GM12878 (cell line): ENCODE measurements at regions of chr11 and their contacts with region 1.

Region 1: GRCh38 chr11:93234602-93235207 is 36.9 kb upstream of the SLC36A4 start:
- DNase-seq: peak; percentile 42
- ATAC-seq: peak; percentile 99
- H3K4me3 ChIP-seq: no peak overlapping the region
- H3K27ac ChIP-seq: no peak overlapping the region
- H3K4me1 ChIP-seq: no peaks in the 10 kb centered on the region
- H3K27me3 ChIP-seq: no peaks in the 10 kb centered on the region; a peak in 1 of 4 replicates
- CTCF ChIP-seq: peak; percentile 95 to 99 (median 98); a peak in 5 of 6 replicates
- EP300 ChIP-seq: no peak
- POLR2A ChIP-seq: no peak
- RAD21 ChIP-seq: peak; percentile 98

Region 2: DNA sequence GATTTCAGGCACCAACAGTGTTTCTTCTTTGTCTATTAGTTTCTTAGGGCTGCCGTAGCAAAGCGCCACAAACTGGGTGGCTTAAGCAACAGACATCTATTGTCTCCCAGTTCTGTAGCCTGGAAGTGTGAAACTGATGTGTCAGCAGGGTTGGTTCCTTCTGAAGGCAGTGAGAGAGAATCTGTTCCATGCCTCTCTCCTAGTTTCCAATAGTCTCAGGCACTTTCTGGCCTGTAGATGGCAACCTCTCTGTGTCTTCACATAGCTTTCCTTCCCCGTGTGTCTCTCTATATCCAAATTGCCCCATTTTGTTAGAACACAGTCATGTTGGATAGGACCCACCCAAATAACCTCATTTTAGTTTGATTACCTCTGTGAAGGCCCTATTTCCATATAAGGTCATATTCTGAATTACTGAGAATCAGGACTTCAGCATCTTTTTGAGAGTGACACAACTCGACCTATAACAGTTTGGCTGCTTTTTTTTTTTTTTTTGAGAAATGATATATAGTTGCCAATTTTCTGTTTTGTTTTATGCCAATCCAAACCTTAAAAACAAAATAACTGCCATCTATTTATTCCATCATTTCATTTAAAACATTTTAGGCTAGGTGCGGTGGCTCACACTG is 145.1 kb before region 1 on chr11:
- CTCF ChIA-PET with region 1: no interaction called
- POLR2A ChIA-PET with region 1: no interaction called
- RAD21 ChIA-PET with region 1: no interaction called
- SMC1A ChIA-PET with region 1: no interaction called
- in situ Hi-C with region 1: no loop called
- intact Hi-C with region 1: loop called (anchors 5 kb)
- DNase-seq: no peak
- ATAC-seq: peak; percentile 79
- H3K4me3 ChIP-seq: no peak overlapping the region
- H3K27ac ChIP-seq: no peak overlapping the region
- H3K4me1 ChIP-seq: no peaks in the 10 kb centered on the region
- H3K27me3 ChIP-seq: no peaks in the 10 kb centered on the region; a peak in 1 of 4 replicates
- CTCF ChIP-seq: peak; percentile 46 to 53 (median 48)
- EP300 ChIP-seq: no peak
- POLR2A ChIP-seq: no peak
- RAD21 ChIP-seq: peak; percentile 47; the same call in 1 of the 2 replicates

Region 3: DNA sequence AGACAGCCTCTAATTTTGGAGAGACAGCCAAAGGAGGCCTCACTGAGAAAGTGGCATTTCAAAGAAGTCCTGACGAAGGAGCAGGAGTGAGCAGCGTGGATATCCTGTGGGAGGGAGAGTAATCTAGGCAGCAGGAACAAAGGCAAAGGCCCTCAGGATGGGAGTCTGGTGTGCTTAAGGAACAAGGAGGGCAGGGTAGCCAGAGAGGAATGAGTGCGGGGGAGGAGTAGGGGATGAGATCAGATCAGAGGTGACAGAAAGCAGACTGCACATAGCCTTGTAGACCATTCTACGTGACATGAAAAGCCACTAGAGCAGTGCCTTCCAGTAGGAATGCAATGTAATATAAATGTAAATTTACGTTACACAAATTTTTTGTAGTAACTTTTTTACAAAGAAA is 42.5 kb before region 1 on chr11:
- CTCF ChIA-PET with region 1: no interaction called
- POLR2A ChIA-PET with region 1: no interaction called
- RAD21 ChIA-PET with region 1: no interaction called
- SMC1A ChIA-PET with region 1: no interaction called
- in situ Hi-C with region 1: no loop called
- intact Hi-C with region 1: no loop called
- DNase-seq: no peak
- ATAC-seq: no peak
- H3K4me3 ChIP-seq: no peak overlapping the region
- H3K27ac ChIP-seq: no peak overlapping the region
- H3K4me1 ChIP-seq: no peaks in the 10 kb centered on the region
- H3K27me3 ChIP-seq: no peaks in the 10 kb centered on the region
- CTCF ChIP-seq: no peak
- EP300 ChIP-seq: no peak
- POLR2A ChIP-seq: no peak
- RAD21 ChIP-seq: no peak

Region 4: DNA sequence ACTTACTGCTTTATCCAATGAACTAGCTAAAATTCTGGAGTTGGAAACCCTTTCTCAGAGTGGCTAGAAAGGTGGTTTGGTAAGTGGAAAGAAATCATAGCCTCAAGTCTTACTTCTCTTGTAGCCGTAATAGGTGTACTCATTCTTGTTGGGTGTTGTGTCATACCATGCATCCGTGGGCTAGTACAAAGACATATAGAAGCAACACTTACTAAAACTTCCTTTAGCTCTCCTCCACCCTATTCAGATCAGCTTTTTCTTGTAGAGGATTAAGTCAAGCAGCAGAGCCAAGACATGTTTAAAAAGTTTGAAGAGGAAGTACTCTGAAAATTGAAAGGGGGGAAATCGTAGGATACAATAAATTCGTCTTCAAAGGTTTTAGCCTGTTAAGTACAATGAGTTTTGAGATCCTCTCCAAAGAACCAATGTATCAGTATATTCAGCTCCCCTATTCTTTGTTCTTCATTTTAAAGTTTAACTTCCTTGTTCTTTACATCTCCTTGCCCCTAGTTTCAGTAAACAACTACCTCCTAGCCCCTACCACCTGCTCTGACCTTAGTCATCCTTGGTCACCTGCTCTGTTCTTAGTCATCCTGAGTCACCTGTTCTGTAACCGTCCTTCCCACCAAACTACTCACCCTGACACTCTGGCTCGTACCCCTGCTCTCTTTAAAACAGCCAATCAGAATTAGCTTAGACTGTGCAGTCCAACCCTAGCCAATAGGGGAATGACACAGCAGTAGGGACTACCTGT is 33.8 kb after region 1 on chr11:
- CTCF ChIA-PET with region 1: no interaction called
- POLR2A ChIA-PET with region 1: no interaction called
- RAD21 ChIA-PET with region 1: no interaction called
- SMC1A ChIA-PET with region 1: no interaction called
- in situ Hi-C with region 1: no loop called
- intact Hi-C with region 1: no loop called
- DNase-seq: no peak
- ATAC-seq: no peak
- H3K4me3 ChIP-seq: no peak overlapping the region
- H3K27ac ChIP-seq: no peak overlapping the region
- H3K4me1 ChIP-seq: no peaks in the 10 kb centered on the region
- H3K27me3 ChIP-seq: no peaks in the 10 kb centered on the region
- CTCF ChIP-seq: no peak
- EP300 ChIP-seq: no peak
- POLR2A ChIP-seq: no peak
- RAD21 ChIP-seq: no peak

Region 5: DNA sequence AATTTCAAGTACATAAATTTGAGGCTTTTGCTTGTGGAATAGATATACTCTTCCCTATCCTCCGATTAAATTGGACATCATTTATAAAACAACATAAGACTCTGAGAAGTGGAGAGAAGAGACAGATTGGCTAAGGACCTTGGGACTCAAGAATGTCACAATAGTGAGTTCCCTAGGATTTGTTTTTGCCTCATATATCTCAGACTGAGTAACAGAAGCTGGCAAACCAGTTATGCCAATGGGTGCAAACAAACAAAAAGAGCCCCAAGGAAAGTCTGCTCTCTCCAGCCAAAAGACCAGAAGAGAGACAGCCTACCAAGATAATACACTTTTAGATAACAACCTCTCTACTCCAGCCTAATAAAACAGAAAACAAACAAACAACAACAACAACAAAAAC is 124.7 kb after region 1 on chr11:
- CTCF ChIA-PET with region 1: no interaction called
- POLR2A ChIA-PET with region 1: no interaction called
- RAD21 ChIA-PET with region 1: no interaction called
- SMC1A ChIA-PET with region 1: no interaction called
- in situ Hi-C with region 1: no loop called
- intact Hi-C with region 1: no loop called
- DNase-seq: no peak
- ATAC-seq: no peak
- H3K4me3 ChIP-seq: no peak overlapping the region
- H3K27ac ChIP-seq: no peak overlapping the region
- H3K4me1 ChIP-seq: no peaks in the 10 kb centered on the region
- H3K27me3 ChIP-seq: no peaks in the 10 kb centered on the region
- CTCF ChIP-seq: no peak
- EP300 ChIP-seq: no peak
- POLR2A ChIP-seq: no peak
- RAD21 ChIP-seq: no peak

Region 6: DNA sequence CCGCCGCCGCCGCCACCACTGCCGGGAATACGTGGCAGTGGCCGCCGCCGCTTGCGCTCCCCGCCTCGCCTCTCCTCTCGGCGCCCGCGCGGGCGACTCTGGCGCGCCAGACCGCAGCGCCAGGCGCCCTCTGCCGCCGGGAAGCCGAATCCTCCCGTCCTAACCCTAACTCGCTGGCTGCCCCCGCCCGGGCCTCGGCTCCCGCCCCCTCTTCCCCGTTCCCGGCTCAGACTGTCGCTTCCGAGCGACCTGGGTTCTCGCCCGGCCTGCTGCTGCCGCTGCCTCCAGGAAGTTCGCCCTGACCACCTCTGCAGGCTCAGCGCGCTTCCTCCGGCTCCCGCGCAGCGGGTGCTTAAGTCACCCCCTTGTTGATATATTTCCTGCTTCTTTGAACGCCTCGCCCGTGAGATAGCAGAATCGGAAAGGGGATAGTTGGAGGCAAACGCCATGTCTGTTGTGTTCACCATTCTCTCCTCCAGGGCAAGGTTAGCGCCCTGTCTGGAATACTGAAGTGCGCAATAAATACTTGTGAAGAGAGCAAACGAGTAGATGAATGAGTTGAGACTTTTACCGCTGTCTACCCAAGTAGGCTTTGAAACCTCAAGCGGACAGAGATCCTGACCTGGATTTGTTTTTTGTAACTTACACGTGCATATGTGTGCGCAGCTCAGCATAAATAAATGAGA is 308.7 kb after region 1 on chr11 and contains the start of gene SMCO4:
- CTCF ChIA-PET with region 1: interaction called, 46 read pairs
- POLR2A ChIA-PET with region 1: no interaction called
- RAD21 ChIA-PET with region 1: interaction called, 44 read pairs
- SMC1A ChIA-PET with region 1: interaction called, 24 read pairs
- in situ Hi-C with region 1: loop called (anchors 5 kb)
- intact Hi-C with region 1: loop called (anchors 1 kb)
- DNase-seq: no peak
- ATAC-seq: peak; percentile 78
- H3K4me3 ChIP-seq: peak within 1 kb of the TSS; percentile 91
- H3K27ac ChIP-seq: peak within 1 kb of the TSS; percentile 45
- H3K4me1 ChIP-seq: peaks cover 12% of the 10 kb centered on the region
- H3K27me3 ChIP-seq: no peaks in the 10 kb centered on the region
- CTCF ChIP-seq: peak; percentile 52 to 90 (median 73)
- EP300 ChIP-seq: no peak
- POLR2A ChIP-seq: peak; percentile 58
- RAD21 ChIP-seq: peak; percentile 82
- polyA plus RNA-seq, gene SMCO4: 3.6 to 8.1 TPM

Region 7: GRCh38 chr11:93652161-93652597 is 417.5 kb after region 1 on chr11:
- CTCF ChIA-PET with region 1: interaction called, 81 read pairs
- POLR2A ChIA-PET with region 1: no interaction called
- RAD21 ChIA-PET with region 1: interaction called, 26 read pairs
- SMC1A ChIA-PET with region 1: interaction called, 39 read pairs
- in situ Hi-C with region 1: no loop called
- intact Hi-C with region 1: loop called (anchors 1 kb)
- DNase-seq: no peak
- ATAC-seq: peak; percentile 24; the same call in 1 of the 3 replicates
- H3K4me3 ChIP-seq: no peak overlapping the region
- H3K27ac ChIP-seq: no peak overlapping the region
- H3K4me1 ChIP-seq: no peaks in the 10 kb centered on the region
- H3K27me3 ChIP-seq: no peaks in the 10 kb centered on the region
- CTCF ChIP-seq: peak; percentile 46 to 68 (median 63)
- EP300 ChIP-seq: no peak
- POLR2A ChIP-seq: no peak
- RAD21 ChIP-seq: peak; percentile 68

Region 8: DNA sequence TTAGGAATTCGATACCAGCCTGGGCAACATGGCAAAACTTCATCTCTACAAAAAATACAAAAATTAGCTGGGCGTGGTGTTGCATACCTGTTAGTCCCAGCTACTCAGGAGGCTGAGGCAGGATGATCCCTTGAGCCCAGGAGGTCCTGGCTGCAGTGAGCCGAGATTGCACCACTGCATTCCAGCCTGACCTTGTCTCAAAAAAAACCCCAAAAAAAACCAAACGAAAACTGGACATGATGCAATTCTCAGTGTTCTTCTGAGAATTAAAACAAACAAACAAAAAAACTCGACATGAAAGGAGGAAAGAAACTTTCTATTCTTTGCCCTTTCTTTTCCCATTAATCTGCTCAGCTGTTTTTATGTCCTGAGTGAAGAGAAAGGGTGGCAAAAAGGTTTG is 556.8 kb after region 1 on chr11:
- CTCF ChIA-PET with region 1: no interaction called
- POLR2A ChIA-PET with region 1: no interaction called
- RAD21 ChIA-PET with region 1: no interaction called
- SMC1A ChIA-PET with region 1: no interaction called
- in situ Hi-C with region 1: no loop called
- intact Hi-C with region 1: loop called (anchors 10 kb)
- DNase-seq: no peak
- ATAC-seq: no peak
- H3K4me3 ChIP-seq: no peak overlapping the region
- H3K27ac ChIP-seq: no peak overlapping the region
- H3K4me1 ChIP-seq: no peaks in the 10 kb centered on the region
- H3K27me3 ChIP-seq: no peaks in the 10 kb centered on the region
- CTCF ChIP-seq: no peak
- EP300 ChIP-seq: no peak
- POLR2A ChIP-seq: no peak
- RAD21 ChIP-seq: no peak

Region 9: GRCh38 chr11:93895106-93895862 is 660.6 kb after region 1 on chr11:
- CTCF ChIA-PET with region 1: no interaction called
- POLR2A ChIA-PET with region 1: no interaction called
- RAD21 ChIA-PET with region 1: no interaction called
- SMC1A ChIA-PET with region 1: no interaction called
- in situ Hi-C with region 1: no loop called
- intact Hi-C with region 1: no loop called
- DNase-seq: no peak
- ATAC-seq: peak; percentile 82
- H3K4me3 ChIP-seq: no peak overlapping the region
- H3K27ac ChIP-seq: no peak overlapping the region
- H3K4me1 ChIP-seq: no peaks in the 10 kb centered on the region
- H3K27me3 ChIP-seq: no peaks in the 10 kb centered on the region
- CTCF ChIP-seq: peak; percentile 51 to 58 (median 56)
- EP300 ChIP-seq: no peak
- POLR2A ChIP-seq: no peak
- RAD21 ChIP-seq: peak; percentile 76